Ascending aorta (tissue), 2 donors: ENCODE measurements at regions of chr10 and their contacts with region 1.

Region 1: DNA sequence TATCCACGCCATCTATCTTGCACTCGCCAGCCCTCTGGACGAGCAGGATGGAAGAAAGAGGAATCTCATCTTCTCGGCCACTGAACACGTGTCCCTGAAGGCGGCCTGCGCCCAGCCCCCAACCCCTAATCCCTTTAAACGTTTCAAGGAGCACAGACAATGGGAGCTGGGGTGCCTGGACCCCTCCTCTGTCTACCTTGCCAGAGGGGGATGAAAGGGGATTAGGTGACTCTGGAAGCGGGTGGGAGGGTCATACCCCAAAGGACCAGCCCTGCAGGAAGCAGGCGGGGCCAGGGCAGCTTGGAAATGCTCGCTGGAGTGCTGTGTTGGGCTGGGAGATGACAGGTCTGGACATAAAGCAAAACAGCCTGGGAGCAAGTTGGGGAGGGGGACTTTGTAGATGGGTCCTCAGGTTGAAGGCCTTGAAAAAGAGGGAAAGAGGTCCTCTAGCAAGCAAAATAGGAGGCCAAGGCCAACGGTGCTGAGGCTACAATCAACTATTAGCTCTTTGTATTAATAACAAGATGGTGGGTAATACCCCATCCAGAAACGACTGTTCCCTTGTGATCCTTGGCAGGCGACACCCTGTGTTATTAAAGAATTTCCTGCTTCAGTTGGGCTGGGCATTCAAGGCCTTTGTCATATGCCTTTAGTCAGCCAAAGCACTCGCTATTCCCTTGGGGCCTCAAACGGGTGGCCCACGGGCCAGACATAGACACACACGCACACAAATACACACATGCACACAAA is 126.5 kb upstream of the UNC5B start:
- DNase-seq: peak in 1 of 2 donors; percentile 61
- H3K4me3 ChIP-seq: no peak overlapping the region
- H3K27ac ChIP-seq: peak overlapping the region in 1 of 2 donors; percentile 4
- H3K4me1 ChIP-seq: peaks cover 0 to 22% of the 10 kb centered on the region in 2 donors
- H3K27me3 ChIP-seq: no peaks in the 10 kb centered on the region
- CTCF ChIP-seq: no peak

Region 2: GRCh38 chr10:71068861-71069271 is 17.0 kb before region 1 on chr10:
- intact Hi-C with region 1: loop called (anchors 2 kb)
- DNase-seq: peak; percentile 58 to 90
- H3K4me3 ChIP-seq: no peak overlapping the region
- H3K27ac ChIP-seq: peak overlapping the region; percentile 86 to 89
- H3K4me1 ChIP-seq: peaks cover 5 to 21% of the 10 kb centered on the region in 2 donors
- H3K27me3 ChIP-seq: no peaks in the 10 kb centered on the region
- CTCF ChIP-seq: no peak

Region 3: GRCh38 chr10:71143610-71144009 is 57.7 kb after region 1 on chr10:
- intact Hi-C with region 1: loop called (anchors 5 kb)
- DNase-seq: peak in 1 of 2 donors; percentile 70
- H3K4me3 ChIP-seq: no peak overlapping the region
- H3K27ac ChIP-seq: peak overlapping the region; percentile 58 to 78
- H3K4me1 ChIP-seq: peaks cover 5 to 16% of the 10 kb centered on the region in 2 donors
- H3K27me3 ChIP-seq: no peaks in the 10 kb centered on the region
- CTCF ChIP-seq: no peak